Posterior vena cava (tissue), 2 donors: ENCODE measurements at regions of chr3 and their contacts with region 1.

Region 1: DNA sequence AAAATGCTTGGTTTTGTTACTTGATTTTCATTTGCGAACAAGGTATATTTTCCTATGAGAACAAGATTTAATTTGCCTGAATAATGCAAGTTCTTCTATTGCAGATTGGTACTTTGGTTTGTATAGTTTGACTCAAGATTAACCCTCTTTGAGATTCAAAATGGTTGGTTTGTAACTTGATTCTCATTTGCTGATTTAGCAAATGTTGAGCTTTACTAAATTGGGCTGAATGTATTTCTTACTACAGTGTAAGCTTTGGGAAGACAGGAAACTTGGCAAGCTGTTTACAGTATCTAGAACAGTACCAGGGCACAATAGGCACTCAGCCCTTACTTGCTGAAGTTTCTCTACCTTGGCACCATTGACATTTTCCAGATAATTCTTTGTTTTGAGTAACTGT is 3.7 kb upstream of the SYNPR start:
- DNase-seq: no peak

Region 2: DNA sequence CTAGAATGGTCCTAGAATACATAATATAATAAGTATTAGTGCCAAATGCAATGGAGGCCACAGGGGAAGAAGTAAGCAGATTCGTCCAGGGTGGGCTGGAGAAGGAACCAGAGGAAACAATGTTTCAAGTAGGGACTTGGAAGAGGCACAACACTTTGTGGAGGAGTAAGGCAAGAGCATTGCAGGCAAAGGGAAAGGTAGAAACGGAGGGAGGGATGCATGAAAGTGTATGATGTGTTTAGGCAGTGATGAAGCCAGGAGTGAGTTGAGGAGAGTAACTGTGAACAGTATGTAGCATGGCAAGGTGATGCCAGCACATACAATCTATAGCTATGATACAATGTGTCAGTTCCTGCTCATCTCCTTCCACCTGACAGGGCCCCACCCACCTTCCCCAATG is 115.3 kb before region 1 on chr3:
- intact Hi-C with region 1: loop called in 1 of 2 experiments (anchors 5 kb)
- DNase-seq: no peak

Region 3: GRCh38 chr3:63331520-63331919 is 57.2 kb after region 1 on chr3:
- intact Hi-C with region 1: loop called in 1 of 2 experiments (anchors 2 kb)
- DNase-seq: no peak

Region 4: GRCh38 chr3:63343674-63344073 is 69.3 kb after region 1 on chr3:
- intact Hi-C with region 1: no loop called
- DNase-seq: peak; percentile 91